Activated T-helper 2 cell treated with anti-CD3 and anti-CD28 coated beads, Interferon-gamma antibody, Interleukin-2, Interleukin-4, amounts not matched to agents 10 μg/mL and 5 μg/mL and 100 μg/mL, durations not matched to agents 14 hours and 24 hours and 36 hours (primary cell): ENCODE measurements at regions of chr18 and their contacts with region 1.

Region 1: GRCh38 chr18:830315-830901 is 18.4 kb upstream of the YES1 start:
- DNase-seq: no peak
- H3K4me3 Mint-ChIP-seq: peak overlapping the region; percentile 36
- H3K27ac Mint-ChIP-seq: peak overlapping the region; percentile 56
- H3K4me1 Mint-ChIP-seq: peaks cover 21% of the 10 kb centered on the region
- H3K27me3 Mint-ChIP-seq: peaks cover 6% of the 10 kb centered on the region

Region 2: DNA sequence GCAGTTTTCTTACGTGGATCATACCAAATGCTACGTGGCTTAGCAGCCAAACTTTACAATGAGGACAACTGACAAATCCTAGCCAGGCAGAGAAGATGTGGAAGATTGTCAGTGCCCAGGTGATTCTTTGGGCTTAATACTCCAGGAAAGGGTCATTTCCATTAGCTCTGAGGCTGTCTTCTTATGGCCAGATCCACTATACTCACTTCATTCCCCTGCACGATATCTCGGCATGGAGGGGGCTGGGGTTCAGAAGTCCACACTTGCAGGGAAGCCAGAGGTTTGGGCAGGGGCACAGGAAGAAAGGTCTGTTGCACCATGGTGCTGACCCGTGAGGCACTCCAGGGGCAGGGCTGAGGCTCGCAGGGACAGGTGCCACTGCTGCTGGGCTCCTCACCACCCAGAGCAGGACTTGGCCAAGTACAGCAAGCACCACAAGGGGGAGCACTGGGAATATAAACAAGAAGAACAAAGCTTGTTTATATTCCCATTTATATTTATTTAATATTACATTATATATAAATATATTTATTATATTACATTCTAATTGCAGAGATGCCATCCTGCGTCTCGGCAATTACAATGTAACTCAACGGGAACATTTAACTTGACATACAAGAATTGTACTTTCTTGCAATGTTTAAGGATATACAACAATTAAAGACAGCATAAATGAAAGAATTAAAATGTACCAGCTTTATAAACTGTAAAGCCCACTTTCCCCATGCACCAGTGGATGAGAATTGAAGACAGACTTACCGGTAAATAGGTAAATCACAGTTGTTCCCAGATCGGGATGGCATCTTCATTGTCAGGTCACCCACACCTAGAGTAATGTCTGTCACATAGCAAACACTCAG is 206.4 kb before region 1 on chr18:
- intact Hi-C with region 1: loop called (anchors 1 kb)
- DNase-seq: peak; percentile 43
- H3K4me3 Mint-ChIP-seq: no peak overlapping the region
- H3K27ac Mint-ChIP-seq: no peak overlapping the region
- H3K4me1 Mint-ChIP-seq: peaks cover 2% of the 10 kb centered on the region
- H3K27me3 Mint-ChIP-seq: peaks cover 34% of the 10 kb centered on the region

Region 3: DNA sequence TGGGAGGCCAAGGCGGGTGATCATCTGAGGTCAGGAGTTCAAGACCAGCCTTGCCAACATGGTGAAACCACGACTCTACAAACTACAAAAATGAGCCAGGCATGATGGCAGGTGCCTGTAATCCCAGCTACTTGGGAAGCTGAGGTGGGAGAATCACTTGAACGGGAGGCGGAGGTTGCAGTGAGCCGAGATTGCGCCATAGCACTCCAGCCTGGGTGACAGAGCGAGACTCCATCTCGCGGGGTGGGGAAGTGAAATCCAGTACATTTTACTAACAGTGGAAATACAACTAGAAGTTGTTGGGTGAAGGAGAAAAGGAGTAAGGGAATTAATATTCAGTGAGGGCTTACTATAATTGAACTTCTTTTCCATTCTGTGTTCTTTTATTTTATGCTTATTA is 104.8 kb before region 1 on chr18:
- intact Hi-C with region 1: no loop called
- DNase-seq: no peak
- H3K4me3 Mint-ChIP-seq: no peak overlapping the region
- H3K27ac Mint-ChIP-seq: no peak overlapping the region
- H3K4me1 Mint-ChIP-seq: peaks cover 2% of the 10 kb centered on the region
- H3K27me3 Mint-ChIP-seq: no peaks in the 10 kb centered on the region

Region 4: GRCh38 chr18:741931-742512 is 88.4 kb before region 1 on chr18:
- intact Hi-C with region 1: loop called (anchors 1 kb)
- DNase-seq: no peak
- H3K4me3 Mint-ChIP-seq: no peak overlapping the region
- H3K27ac Mint-ChIP-seq: no peak overlapping the region
- H3K4me1 Mint-ChIP-seq: peaks cover 5% of the 10 kb centered on the region
- H3K27me3 Mint-ChIP-seq: no peaks in the 10 kb centered on the region

Region 5: GRCh38 chr18:1037776-1038175 is 207.4 kb after region 1 on chr18:
- intact Hi-C with region 1: no loop called
- DNase-seq: no peak
- H3K4me3 Mint-ChIP-seq: no peak overlapping the region
- H3K27ac Mint-ChIP-seq: no peak overlapping the region
- H3K4me1 Mint-ChIP-seq: no peaks in the 10 kb centered on the region
- H3K27me3 Mint-ChIP-seq: no peaks in the 10 kb centered on the region